Heart right ventricle (tissue), 16 donors: ENCODE measurements at regions of chr12 and their contacts with region 1.

Region 1: DNA sequence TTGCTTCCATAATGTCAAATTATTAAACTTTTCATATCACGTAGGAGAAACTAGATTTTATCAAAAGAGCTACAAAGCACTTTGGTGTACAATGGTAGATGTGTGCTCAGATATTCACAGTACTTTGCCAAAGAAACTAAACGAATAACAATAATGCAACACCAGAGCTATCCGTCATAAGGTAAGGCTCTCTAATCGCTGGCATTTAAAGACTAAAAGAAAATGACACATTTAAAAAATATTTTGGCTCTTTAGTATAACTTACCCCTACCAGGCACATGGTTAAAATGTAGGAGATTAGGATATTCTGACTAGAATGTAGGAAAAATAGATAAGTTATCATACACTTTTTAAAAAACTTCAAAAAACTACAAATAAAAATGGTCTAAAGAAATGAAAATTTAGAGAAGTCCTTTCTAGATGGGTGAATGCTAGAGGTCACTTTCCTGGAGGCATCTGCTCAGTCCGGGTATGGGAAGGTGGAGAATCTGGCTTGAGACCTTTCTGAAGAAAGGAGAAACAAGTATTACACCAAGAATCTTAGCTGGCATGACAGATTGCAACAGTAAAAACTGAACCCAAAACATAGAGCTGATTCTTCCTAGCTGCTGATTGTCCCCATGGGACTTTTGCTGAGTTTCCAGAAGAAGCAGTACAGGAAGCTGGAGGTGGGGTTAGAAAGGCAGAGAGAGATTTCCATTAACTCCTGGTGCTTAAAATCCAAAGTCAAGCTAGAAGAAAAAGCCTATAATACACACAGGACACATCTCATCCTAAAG is 67.9 kb downstream of the FAR2 start:
- DNase-seq: peak in 1 of 2 donors; percentile 27
- ATAC-seq: peak in 6 of 8 donors; percentile 40 to 70 (median 64)
- H3K4me3 ChIP-seq: no peak overlapping the region
- H3K27ac ChIP-seq: peak overlapping the region in 6 of 10 donors; percentile 7 to 63 (median 29)
- H3K4me1 ChIP-seq: peaks cover 0 to 35% (median 25%) of the 10 kb centered on the region in 9 donors
- H3K27me3 ChIP-seq: no peaks in the 10 kb centered on the region
- CTCF ChIP-seq: no peak

Region 2: DNA sequence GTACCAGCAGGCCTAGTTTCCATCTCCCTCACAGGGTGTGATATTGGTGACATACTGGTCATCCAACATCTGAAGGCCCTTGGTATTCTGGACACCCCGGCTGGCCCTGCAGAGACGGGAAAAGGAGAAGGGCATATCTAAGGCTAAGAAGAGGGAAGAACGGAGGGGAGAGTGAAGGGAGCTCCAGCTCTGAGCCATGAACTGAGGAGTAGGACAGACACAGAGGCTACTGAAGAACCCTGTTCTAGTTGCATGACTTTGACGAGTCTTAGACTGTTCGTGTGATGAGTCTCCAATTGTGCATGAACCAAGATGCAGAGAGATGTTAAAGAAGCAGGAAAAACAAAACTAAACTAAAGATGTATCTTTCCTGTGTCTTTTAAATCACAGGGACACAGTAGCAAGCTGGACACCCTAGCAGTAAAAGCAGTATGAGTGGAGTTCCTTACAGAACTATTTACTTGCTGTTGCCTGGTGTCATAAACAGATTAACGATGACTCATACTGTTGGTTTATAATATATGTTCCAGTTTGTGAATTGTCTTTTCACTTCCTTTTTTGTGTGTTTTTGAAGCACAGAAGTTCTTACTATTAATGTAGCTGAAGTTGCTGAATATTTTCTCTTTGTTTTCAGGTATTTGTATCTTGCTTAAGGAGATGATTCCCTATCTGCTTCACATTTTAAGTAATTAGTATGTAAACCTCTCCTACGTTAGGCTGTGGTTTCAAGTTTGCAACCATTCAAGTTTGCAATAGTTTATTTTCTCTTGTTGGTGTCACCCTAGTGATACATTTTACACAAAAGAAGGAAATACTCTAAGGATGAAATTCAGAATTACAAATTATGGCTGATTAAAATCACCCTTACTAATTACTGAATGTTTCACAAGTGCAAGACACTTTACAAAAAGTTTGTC is 52.3 kb before region 1 on chr12:
- intact Hi-C with region 1: loop called in 1 of 10 experiments (anchors 10 kb)
- DNase-seq: no peak
- ATAC-seq: peak in 7 of 8 donors; percentile 78 to 94 (median 83)
- H3K4me3 ChIP-seq: no peak overlapping the region
- H3K27ac ChIP-seq: peak overlapping the region in 4 of 10 donors; percentile 3 to 74 (median 16)
- H3K4me1 ChIP-seq: peaks cover 0 to 56% (median 11%) of the 10 kb centered on the region in 9 donors
- H3K27me3 ChIP-seq: no peaks in the 10 kb centered on the region
- CTCF ChIP-seq: no peak